CD8-positive, alpha-beta T cell (primary cell): ENCODE measurements at regions of chr20 and their contacts with region 1.

Region 1: DNA sequence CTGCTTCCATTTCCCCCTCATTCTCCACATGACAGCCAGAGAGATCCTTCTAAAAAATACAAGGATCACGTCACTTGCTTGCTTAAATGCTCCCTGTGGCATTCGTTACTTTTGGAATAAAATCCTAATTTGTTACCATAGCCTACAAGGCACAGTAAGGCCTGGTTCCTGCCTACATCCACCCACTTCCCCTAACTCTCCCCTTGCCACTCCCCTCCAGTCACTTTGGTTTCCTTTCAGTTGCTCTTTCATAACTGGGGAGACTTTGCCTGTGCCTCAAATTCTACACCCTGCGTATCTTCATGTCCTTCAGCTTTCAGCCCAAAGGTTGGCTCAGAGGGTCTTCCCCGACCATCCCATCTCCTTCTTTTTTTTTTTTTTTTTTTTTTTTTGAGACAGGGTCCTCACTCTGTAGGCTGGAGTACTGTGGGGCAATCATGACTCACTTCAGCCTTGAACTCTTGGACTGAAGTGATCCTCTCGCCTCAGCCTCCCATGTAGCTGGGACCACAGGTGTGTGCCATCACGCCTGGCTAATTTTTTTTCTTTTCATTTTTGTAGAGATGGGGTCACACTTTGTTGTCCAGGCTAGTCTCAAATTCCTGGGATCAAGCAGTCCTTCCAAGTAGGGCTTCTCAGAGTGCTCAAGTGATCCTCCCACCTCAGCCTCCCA is 12.5 kb downstream of the ID1 start:
- DNase-seq: no peak
- ATAC-seq: no peak
- H3K4me3 ChIP-seq: no peak overlapping the region
- H3K4me3 Mint-ChIP-seq: no peak overlapping the region
- H3K27ac ChIP-seq: no peak overlapping the region
- H3K27ac Mint-ChIP-seq: no peak overlapping the region
- H3K4me1 ChIP-seq: no peaks in the 10 kb centered on the region
- H3K4me1 Mint-ChIP-seq: peaks cover 2% of the 10 kb centered on the region
- H3K27me3 ChIP-seq: peaks cover 0 to 7% of the 10 kb centered on the region in 2 experiments
- H3K27me3 Mint-ChIP-seq: peaks cover 10% of the 10 kb centered on the region
- CTCF ChIP-seq: no peak

Region 2: GRCh38 chr20:31494131-31494530 is 123.4 kb before region 1 on chr20:
- CTCF ChIA-PET with region 1: no interaction called
- POLR2A ChIA-PET with region 1: no interaction called
- intact Hi-C with region 1: no loop called
- DNase-seq: no peak
- ATAC-seq: no peak
- H3K4me3 ChIP-seq: no peak overlapping the region
- H3K4me3 Mint-ChIP-seq: no peak overlapping the region
- H3K27ac ChIP-seq: no peak overlapping the region
- H3K27ac Mint-ChIP-seq: no peak overlapping the region
- H3K4me1 ChIP-seq: no peaks in the 10 kb centered on the region
- H3K4me1 Mint-ChIP-seq: no peaks in the 10 kb centered on the region
- H3K27me3 ChIP-seq: no peaks in the 10 kb centered on the region
- H3K27me3 Mint-ChIP-seq: peaks cover 26% of the 10 kb centered on the region
- CTCF ChIP-seq: no peak

Region 3: DNA sequence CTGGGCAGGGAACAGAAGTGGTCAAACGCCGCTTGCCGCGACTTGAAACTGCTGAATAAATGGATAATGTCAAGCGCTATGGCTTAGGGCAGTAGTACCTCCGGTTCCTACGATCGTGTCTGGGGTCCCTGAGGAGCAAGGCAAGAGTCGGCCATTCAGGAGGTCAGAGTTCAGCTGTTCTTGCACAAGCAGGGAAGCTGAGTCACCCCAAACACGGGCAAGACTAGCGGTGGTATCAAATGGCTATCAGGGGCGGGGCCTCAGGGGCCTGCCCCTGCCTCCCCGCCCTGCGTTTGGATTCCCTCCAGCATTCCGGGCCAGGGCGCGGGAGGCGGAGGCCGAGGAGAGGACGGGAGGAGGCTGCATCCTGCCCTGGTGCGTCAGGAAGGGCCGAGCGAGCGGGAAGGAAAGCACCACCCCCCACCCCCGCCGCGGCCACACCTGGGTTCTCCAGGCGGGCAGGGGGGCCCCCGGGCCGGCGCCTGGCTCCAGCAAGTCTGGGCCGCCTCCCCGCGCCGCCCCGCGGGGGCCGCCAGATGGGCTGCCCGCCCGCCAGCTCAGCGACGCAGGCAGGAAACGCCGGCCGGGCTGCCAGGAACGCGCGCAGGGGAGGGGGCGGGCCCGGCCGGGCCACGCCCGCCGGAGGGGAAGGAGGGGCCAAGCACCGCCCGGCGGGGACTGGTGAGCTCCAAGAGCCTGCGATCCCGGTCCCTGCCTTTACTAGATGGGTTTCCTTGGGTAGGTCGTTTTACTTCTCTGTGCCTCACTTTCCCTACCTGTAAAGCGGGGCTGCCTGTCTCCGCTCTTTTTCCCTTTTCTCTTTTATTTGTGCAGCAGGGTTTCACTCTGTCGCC is 44.6 kb before region 1 on chr20:
- CTCF ChIA-PET with region 1: interaction called, 427 read pairs
- POLR2A ChIA-PET with region 1: interaction called, 20 read pairs
- intact Hi-C with region 1: loop called (anchors 1 kb)
- DNase-seq: peak; percentile 75 to 93 (median 85)
- ATAC-seq: peak; percentile 91
- H3K4me3 ChIP-seq: peak overlapping the region; percentile 75 to 79
- H3K4me3 Mint-ChIP-seq: peak overlapping the region; percentile 87
- H3K27ac ChIP-seq: peak overlapping the region; percentile 51 to 78
- H3K27ac Mint-ChIP-seq: peak overlapping the region; percentile 84
- H3K4me1 ChIP-seq: peaks cover 16% of the 10 kb centered on the region
- H3K4me1 Mint-ChIP-seq: peaks cover 26% of the 10 kb centered on the region
- H3K27me3 ChIP-seq: no peaks in the 10 kb centered on the region
- H3K27me3 Mint-ChIP-seq: no peaks in the 10 kb centered on the region
- CTCF ChIP-seq: no peak